HepG2 (cell line): ENCODE measurements at regions of chrX and their contacts with region 1.

Region 1: GRCh38 chrX:15564981-15565579 is 35.7 kb downstream of the ACE2 start:
- DNase-seq: peak; percentile 20
- ATAC-seq: peak; percentile 92
- H3K4me3 ChIP-seq: no peak overlapping the region
- H3K27ac ChIP-seq: no peak overlapping the region
- H3K4me1 ChIP-seq: peaks cover 11% of the 10 kb centered on the region
- H3K27me3 ChIP-seq: no peaks in the 10 kb centered on the region
- CTCF ChIP-seq: peak; percentile 75
- EP300 ChIP-seq: no peak
- POLR2A ChIP-seq: no peak
- RAD21 ChIP-seq: peak; percentile 44; the same call in 1 of the 2 replicates

Region 2: GRCh38 chrX:15349046-15349445 is 216.0 kb before region 1 on chrX:
- CTCF ChIA-PET with region 1: no interaction called
- POLR2A ChIA-PET with region 1: no interaction called
- in situ Hi-C with region 1: loop called (anchors 10 kb)
- intact Hi-C with region 1: loop called (anchors 1 kb)
- DNase-seq: peak; percentile 55
- ATAC-seq: peak; percentile 75
- H3K4me3 ChIP-seq: no peak overlapping the region
- H3K27ac ChIP-seq: no peak overlapping the region
- H3K4me1 ChIP-seq: no peaks in the 10 kb centered on the region
- H3K27me3 ChIP-seq: no peaks in the 10 kb centered on the region
- CTCF ChIP-seq: peak; percentile 63
- EP300 ChIP-seq: no peak
- POLR2A ChIP-seq: no peak
- RAD21 ChIP-seq: no peak

Region 3: DNA sequence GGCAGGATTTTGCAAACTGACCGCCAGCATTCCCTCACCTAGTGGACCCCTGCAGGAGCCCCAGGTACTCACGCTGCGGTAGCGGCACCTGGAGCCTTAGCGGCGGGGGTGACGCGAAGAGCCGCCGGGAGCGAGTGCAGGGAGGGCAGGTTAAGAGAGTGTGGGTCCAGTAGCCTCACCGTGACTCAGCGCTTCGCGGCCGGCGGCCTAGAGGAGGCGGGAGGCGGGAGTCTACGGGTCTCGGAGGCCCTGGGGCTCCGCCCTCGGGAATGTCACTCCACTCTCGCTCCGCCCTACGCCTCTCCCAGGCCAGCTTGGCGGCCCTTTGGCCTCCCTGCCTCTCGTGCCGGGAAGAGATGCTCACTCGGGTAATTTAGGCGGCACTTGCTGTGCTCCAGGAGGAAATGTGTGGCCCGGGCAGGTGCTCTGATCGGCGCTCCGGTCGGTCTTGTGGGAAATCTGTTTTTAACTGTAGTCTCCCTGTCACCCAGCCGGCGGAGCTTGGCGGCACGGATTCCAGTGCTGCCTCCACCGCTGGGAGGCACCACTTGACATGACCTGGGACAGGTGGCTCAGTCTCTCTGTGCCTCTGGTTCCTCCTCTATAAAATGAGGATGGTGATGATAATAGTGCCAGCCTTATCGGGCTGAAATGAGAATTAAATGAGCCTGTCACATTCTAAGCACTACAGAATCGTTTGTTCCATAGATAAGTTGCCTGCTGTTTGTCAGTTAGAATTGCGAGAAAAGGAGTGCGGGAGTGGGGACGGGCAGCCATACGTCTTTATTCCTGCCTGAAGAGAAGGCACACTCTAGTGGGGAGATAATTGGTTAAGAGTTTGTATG is 71.7 kb before region 1 on chrX and contains the start of gene PIR:
- CTCF ChIA-PET with region 1: interaction called, 6 read pairs
- POLR2A ChIA-PET with region 1: no interaction called
- in situ Hi-C with region 1: no loop called
- intact Hi-C with region 1: loop called (anchors 1 kb)
- DNase-seq: peak; percentile 80
- ATAC-seq: peak; percentile 99
- H3K4me3 ChIP-seq: peak within 1 kb of the TSS; percentile 43 to 73 (median 68); a peak in 5 of 6 replicates
- H3K27ac ChIP-seq: peak within 1 kb of the TSS; percentile 87
- H3K4me1 ChIP-seq: peaks cover 25% of the 10 kb centered on the region
- H3K27me3 ChIP-seq: no peaks in the 10 kb centered on the region
- CTCF ChIP-seq: peak; percentile 68
- EP300 ChIP-seq: peak in 1 of 2 experiments; percentile 43; a peak in 1 of 4 replicates
- POLR2A ChIP-seq: peak; percentile 51 to 65
- RAD21 ChIP-seq: no peak
- total RNA-seq, gene PIR: 38.0 and 53.3 TPM in 2 replicates

Region 4: DNA sequence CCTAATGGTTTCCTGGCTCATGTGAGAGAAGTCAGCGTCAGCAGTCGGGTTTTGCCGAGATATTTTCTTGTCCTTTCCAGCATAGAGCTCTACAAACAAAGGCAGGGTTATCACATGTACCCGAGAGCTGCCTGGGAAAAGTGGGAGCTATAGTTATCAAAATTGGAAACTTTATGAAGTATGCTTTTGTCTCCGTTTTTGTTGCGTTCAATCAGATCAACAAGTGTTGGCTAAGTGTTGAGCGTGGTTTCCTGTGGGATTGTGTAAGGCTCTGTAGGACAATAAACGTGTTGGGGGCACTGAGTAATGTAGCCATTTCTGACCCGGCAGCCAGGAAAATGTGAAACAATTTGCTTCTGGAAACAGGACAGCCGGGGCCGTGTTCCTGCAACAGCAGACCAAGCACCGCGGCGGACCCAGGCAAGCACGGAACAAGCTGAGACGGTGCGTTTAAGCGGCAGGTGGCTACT is 64.5 kb before region 1 on chrX and contains the start of gene BMX:
- CTCF ChIA-PET with region 1: interaction called, 6 read pairs
- POLR2A ChIA-PET with region 1: no interaction called
- in situ Hi-C with region 1: loop called (anchors 10 kb)
- intact Hi-C with region 1: loop called (anchors 1 kb)
- DNase-seq: no peak
- ATAC-seq: no peak
- H3K4me3 ChIP-seq: no peak within 1 kb of the TSS
- H3K27ac ChIP-seq: no peak within 1 kb of the TSS
- H3K4me1 ChIP-seq: 0 out of 2 replicates have a peak, but pooled peaks cover 6% of the 10 kb centered on the region
- H3K27me3 ChIP-seq: no peaks in the 10 kb centered on the region
- CTCF ChIP-seq: no peak
- EP300 ChIP-seq: no peak
- POLR2A ChIP-seq: no peak
- RAD21 ChIP-seq: no peak
- total RNA-seq, gene BMX: not detected in 2 replicates

Region 5: DNA sequence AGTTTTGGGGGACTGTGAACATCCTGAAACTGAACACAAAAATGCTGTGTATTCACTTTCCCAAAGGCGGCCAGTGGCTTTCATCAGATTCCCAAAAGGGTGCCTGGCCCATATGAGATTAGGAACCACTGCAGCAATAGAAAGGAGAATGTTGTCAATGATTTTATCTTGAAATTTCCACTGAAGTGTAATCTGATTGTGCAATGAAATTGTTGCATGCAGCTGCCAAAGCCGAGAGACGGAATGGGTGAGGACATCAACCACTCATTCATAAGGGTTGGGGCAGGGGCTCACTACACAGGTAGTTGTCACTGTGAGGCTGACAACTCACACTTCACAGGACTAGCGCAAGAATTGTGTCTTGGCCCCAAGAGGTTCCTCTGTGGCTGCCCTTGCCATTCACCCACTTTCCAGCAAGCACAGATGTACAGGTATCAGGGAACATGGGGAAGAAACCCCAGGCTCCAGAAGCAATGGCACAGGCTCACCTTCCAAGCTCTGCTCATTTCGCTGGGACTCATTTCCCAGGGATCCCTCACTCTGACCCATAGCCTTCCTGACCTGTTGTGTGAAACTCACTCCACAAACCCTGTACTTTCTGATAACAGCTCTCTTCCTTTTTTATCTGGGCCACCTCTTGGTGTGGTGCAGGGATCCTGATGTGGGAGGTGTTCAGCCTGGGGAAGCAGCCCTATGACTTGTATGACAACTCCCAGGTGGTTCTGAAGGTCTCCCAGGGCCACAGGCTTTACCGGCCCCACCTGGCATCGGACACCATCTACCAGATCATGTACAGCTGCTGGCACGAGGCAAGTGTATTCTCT is 15.7 kb before region 1 on chrX:
- CTCF ChIA-PET with region 1: no interaction called
- POLR2A ChIA-PET with region 1: no interaction called
- in situ Hi-C with region 1: no loop called
- intact Hi-C with region 1: no loop called
- DNase-seq: no peak
- ATAC-seq: no peak
- H3K4me3 ChIP-seq: no peak overlapping the region
- H3K27ac ChIP-seq: no peak overlapping the region
- H3K4me1 ChIP-seq: no peaks in the 10 kb centered on the region
- H3K27me3 ChIP-seq: no peaks in the 10 kb centered on the region
- CTCF ChIP-seq: no peak
- EP300 ChIP-seq: no peak
- POLR2A ChIP-seq: no peak
- RAD21 ChIP-seq: no peak

Region 6: GRCh38 chrX:15645258-15645657 is 80.2 kb after region 1 on chrX:
- CTCF ChIA-PET with region 1: no interaction called
- POLR2A ChIA-PET with region 1: no interaction called
- in situ Hi-C with region 1: no loop called
- intact Hi-C with region 1: loop called (anchors 5 kb)
- DNase-seq: no peak
- ATAC-seq: no peak
- H3K4me3 ChIP-seq: no peak overlapping the region
- H3K27ac ChIP-seq: no peak overlapping the region
- H3K4me1 ChIP-seq: no peaks in the 10 kb centered on the region
- H3K27me3 ChIP-seq: no peaks in the 10 kb centered on the region
- CTCF ChIP-seq: peak; percentile 21; the same call in 1 of the 2 replicates
- EP300 ChIP-seq: no peak
- POLR2A ChIP-seq: no peak
- RAD21 ChIP-seq: no peak